ENCODE measurements at regions of chr20 and their contacts with region 1.

Region 1: GRCh38 chr20:407133-407952 is 756 bp upstream of the RBCK1 start:
- DNase-seq: peak; percentile 95
- ATAC-seq: peak; percentile 90
- H3K4me3 ChIP-seq: peak overlapping the region; percentile 49 to 79 (median 57)
- H3K27ac ChIP-seq: peak overlapping the region; percentile 96
- H3K4me1 ChIP-seq: peaks cover 81% of the 10 kb centered on the region
- H3K27me3 ChIP-seq: no peaks in the 10 kb centered on the region; a peak in 1 of 5 replicates
- CTCF ChIP-seq: peak; percentile 57
- EP300 ChIP-seq: peak; percentile 9 to 25; a peak in 1 of 4 replicates
- POLR2A ChIP-seq: peak; percentile 96 to 98
- RAD21 ChIP-seq: peak; percentile 87

Region 2: GRCh38 chr20:381581-382290 is 25.6 kb before region 1 on chr20:
- CTCF ChIA-PET with region 1: no interaction called
- POLR2A ChIA-PET with region 1: interaction called, 909 read pairs
- in situ Hi-C with region 1: no loop called
- intact Hi-C with region 1: loop called (anchors 2 kb)
- DNase-seq: peak; percentile 85
- ATAC-seq: peak; percentile 69
- H3K4me3 ChIP-seq: peak overlapping the region; percentile 93 to 98 (median 97)
- H3K27ac ChIP-seq: peak overlapping the region; percentile 93
- H3K4me1 ChIP-seq: peaks cover 74% of the 10 kb centered on the region
- H3K27me3 ChIP-seq: no peaks in the 10 kb centered on the region; a peak in 1 of 5 replicates
- CTCF ChIP-seq: no peak; the same call in 1 of the 2 replicates
- EP300 ChIP-seq: 0 out of 4 replicates have a peak, but pooled peaks of 1 of the 2 experiments have one; percentile 37
- POLR2A ChIP-seq: peak; percentile 90
- RAD21 ChIP-seq: peak; percentile 72

Region 3: GRCh38 chr20:396619-397431 is 10.5 kb before region 1 on chr20:
- CTCF ChIA-PET with region 1: no interaction called
- POLR2A ChIA-PET with region 1: interaction called, 909 read pairs
- in situ Hi-C with region 1: no loop called
- intact Hi-C with region 1: no loop called
- DNase-seq: peak; percentile 99
- ATAC-seq: peak; percentile 84
- H3K4me3 ChIP-seq: peak overlapping the region in 1 of 3 experiments; percentile 3; a peak in 1 of 6 replicates
- H3K27ac ChIP-seq: peak overlapping the region; percentile 87
- H3K4me1 ChIP-seq: peaks cover 88% of the 10 kb centered on the region
- H3K27me3 ChIP-seq: no peaks in the 10 kb centered on the region
- CTCF ChIP-seq: peak; percentile 39; the same call in 1 of the 2 replicates
- EP300 ChIP-seq: peak; percentile 95 to 98
- POLR2A ChIP-seq: peak; percentile 23 to 65; a peak in 3 of 4 replicates
- RAD21 ChIP-seq: peak; percentile 83

Region 4: DNA sequence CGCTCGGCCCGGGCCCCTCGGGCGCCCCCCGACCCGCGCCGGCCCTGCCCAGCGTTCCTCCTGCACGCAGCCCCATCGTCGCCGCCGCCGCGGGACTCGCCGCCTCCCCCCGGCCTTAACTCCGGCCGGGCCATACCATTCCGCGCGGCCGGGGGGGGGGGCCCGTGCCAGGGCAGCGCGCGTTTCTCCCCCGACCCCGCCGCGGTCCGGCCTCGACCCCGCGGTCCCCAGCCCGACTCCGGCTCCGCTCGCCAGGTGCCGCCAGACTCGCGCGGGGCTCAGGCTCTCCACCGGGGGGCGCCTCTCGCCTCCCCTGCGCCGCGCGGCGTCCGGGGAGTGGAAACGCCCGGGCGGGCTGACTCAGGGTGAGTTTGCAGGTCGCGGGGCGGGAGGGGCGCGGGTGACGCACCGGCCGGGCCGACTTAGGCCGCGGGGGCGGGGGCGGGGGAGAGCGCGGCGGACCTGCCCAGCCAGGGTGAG is 245.8 kb after region 1 on chr20 and contains the start of gene SRXN1:
- CTCF ChIA-PET with region 1: no interaction called
- POLR2A ChIA-PET with region 1: no interaction called
- in situ Hi-C with region 1: no loop called
- intact Hi-C with region 1: no loop called
- DNase-seq: peak; percentile 92
- ATAC-seq: peak; percentile 87
- H3K4me3 ChIP-seq: peak within 1 kb of the TSS; percentile 67 to 96 (median 93)
- H3K27ac ChIP-seq: peak within 1 kb of the TSS; percentile 75
- H3K4me1 ChIP-seq: peaks cover 37% of the 10 kb centered on the region
- H3K27me3 ChIP-seq: peaks cover 4 to 30% of the 10 kb centered on the region in 2 experiments; a peak in 2 of 5 replicates
- CTCF ChIP-seq: peak; percentile 91
- EP300 ChIP-seq: peak; percentile 14 to 74; a peak in 3 of 4 replicates
- POLR2A ChIP-seq: peak in 1 of 2 experiments; percentile 62; a peak in 1 of 4 replicates
- RAD21 ChIP-seq: peak; percentile 97
- total RNA-seq, gene SRXN1: 87.7 and 98.2 TPM in 2 replicates

Region 5: GRCh38 chr20:1033751-1034414 is 626.5 kb after region 1 on chr20:
- CTCF ChIA-PET with region 1: no interaction called
- POLR2A ChIA-PET with region 1: no interaction called
- in situ Hi-C with region 1: no loop called
- intact Hi-C with region 1: no loop called
- DNase-seq: no peak
- ATAC-seq: no peak
- H3K4me3 ChIP-seq: no peak overlapping the region
- H3K27ac ChIP-seq: no peak overlapping the region
- H3K4me1 ChIP-seq: peaks cover 12% of the 10 kb centered on the region
- H3K27me3 ChIP-seq: 0 out of 5 replicates have a peak, but pooled peaks cover 0 to 4% of the 10 kb centered on the region in 2 experiments
- CTCF ChIP-seq: no peak
- EP300 ChIP-seq: no peak
- POLR2A ChIP-seq: no peak
- RAD21 ChIP-seq: no peak

Measured in HepG2 (cell line).